Dorsolateral prefrontal cortex (tissue), 120 donors: ENCODE measurements at regions of chr20 and their contacts with region 1.

Region 1: GRCh38 chr20:3888622-3889488 is at the start of gene PANK2:
- DNase-seq: peak; percentile 95 to 99 (median 99)
- H3K4me3 ChIP-seq: peak within 1 kb of the TSS; percentile 69 to 100 (median 94)
- H3K27ac ChIP-seq: peak within 1 kb of the TSS; percentile 60 to 99 (median 96)
- H3K27me3 ChIP-seq: no peaks in the 10 kb centered on the region
- CTCF ChIP-seq: peak in 53 of 56 donors; percentile 8 to 76 (median 43)
- total RNA-seq, gene PANK2: 41.7 to 82.4 (median 57.8) TPM

Region 2: DNA sequence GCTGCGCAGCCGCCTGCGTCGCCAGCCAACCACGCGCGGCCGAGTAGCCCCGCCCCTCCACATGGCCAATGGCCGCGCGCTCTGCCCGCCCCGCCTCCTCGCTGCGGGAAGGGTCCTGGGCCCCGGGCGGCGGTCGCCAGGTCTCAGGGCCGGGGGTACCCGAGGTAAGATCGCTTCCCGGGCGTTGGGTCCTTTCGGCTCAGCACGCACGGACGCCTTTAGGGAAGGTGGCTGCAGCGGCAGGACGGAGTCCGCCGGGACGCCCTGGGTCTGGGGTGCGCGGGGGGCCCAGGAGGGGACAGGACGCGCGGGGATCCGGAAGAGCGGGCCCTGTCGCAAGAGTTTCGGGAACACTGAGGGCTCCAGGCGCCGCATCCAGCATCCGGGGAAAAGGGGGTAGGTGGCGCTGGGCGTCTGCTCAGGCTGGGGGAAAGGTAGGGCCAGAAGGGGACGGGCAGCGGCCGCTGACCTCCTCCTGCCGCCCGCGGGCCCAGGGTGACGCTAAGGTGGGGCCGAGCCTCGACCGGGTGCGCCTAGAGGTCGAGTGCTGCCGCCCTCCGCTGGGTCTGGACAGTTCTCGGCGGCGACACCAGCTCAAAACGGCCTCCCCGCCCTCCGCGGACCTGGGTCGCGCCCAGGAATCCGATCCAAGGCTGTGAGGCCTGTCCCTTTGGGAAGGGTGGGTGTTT is 42.0 kb before region 1 on chr20 and contains the start of gene MAVS:
- intact Hi-C with region 1: loop called in 1 of 2 experiments (anchors 2 kb)
- DNase-seq: peak; percentile 76 to 95 (median 86)
- H3K4me3 ChIP-seq: peak within 1 kb of the TSS; percentile 52 to 100 (median 98)
- H3K27ac ChIP-seq: peak within 1 kb of the TSS; percentile 42 to 97 (median 92)
- H3K27me3 ChIP-seq: no peaks in the 10 kb centered on the region
- CTCF ChIP-seq: peak in 27 of 56 donors; percentile 4 to 45 (median 17)
- total RNA-seq, gene MAVS: 17.4 to 50.9 (median 25.6) TPM

Region 3: DNA sequence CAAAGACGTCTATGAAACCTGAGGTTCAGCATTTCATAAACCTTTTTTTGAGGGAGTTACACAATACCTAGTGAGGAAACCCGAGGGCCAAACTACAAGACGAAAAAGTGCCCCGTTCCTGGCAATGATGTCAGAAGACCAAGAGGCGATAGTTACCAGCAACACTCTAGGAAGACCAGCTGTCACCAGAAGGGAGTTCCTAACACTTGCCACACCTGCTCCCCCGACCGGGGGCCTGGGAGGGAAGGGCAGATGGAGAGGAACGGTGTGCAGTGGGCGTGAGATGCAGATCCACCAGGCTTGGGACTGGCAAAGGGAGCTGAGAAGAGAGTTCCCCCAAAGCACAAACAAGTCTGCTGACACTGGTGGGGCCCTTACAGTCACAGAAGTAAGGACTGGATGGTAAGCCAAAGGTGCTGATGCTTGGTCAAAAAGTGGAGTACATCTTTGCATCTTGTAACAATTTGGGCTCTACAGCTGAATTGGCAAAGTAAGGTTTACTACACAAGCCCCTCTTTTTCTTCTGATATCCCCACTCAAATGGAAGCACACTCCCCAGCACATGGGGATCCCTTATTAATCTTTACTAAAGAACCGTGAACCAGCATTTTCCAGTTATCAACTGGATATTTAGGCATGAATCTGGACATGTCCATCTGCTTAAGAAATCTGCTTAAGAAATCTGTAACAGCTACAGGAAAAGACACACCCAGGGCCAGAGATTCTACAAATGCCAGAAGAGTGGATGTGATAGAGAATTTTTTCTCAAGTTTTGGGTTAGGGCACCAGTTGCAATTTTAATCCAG is 38.8 kb after region 1 on chr20:
- intact Hi-C with region 1: loop called (anchors 5 kb)
- DNase-seq: peak in 2 of 10 donors; percentile 50 to 51
- H3K4me3 ChIP-seq: no peak overlapping the region
- H3K27ac ChIP-seq: peak overlapping the region in 37 of 59 donors; percentile 3 to 76 (median 45)
- H3K27me3 ChIP-seq: no peaks in the 10 kb centered on the region
- CTCF ChIP-seq: no peak

Region 4: DNA sequence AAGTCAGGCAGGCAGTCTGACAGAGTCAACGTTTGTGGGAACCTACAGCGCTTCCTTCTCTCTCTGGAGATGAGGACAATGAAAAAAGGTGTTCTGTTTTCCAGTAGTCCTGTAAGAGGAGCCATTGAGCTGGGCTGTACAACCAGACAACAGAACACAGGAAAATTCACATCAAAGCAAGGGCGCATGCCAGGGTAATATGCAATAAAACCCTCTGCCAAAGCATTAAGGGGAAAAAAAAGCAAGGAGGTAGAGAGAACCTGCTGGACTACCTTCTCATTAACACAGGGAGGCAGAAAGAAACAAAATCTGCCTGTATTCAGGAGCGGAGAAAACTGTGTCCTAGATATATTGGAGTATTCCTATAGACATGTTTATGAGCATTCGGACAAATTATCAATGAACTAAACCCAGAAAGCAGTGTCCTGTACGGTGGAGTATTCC is 125.2 kb after region 1 on chr20:
- intact Hi-C with region 1: loop called (anchors 1 to 2 kb)
- DNase-seq: peak in 3 of 10 donors; percentile 19 to 65 (median 48)
- H3K4me3 ChIP-seq: peak overlapping the region in 58 of 59 donors; percentile 6 to 93 (median 84)
- H3K27ac ChIP-seq: peak overlapping the region in 52 of 59 donors; percentile 13 to 96 (median 77)
- H3K27me3 ChIP-seq: no peaks in the 10 kb centered on the region
- CTCF ChIP-seq: peak in 54 of 56 donors; percentile 25 to 66 (median 52)

Region 5: DNA sequence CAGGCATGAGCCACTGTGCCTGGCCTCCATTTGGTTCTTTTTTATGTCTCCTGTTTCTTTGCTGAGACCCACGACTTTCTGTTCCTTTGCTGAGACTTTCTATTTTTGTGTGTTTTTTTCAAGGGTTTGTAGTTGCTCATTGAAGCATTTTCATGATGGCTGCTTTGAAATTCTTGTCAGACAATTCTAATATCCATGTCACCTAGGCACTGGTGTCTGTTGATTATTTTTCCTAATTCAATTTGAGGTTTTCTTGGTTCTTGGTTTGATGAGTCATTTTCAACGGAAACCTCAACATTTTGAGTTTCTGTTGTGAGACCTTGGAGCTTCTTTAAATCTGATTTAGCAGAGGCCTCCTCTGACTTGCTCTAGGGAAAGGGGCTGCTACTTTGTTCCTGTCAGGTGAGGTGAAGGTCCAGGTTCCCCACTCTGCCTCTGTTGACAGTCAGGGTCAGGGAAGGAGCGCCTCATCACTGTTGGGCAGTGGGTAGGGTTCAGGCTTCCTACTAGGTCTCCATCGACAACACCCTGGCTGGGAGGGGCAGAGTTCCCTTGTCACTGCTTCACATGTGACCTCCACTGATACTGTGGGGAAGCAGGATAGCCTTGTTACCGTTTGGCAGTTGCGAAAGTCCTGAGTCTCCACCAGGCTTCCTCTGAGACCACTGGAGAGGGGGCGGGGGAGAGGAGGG is 193.7 kb after region 1 on chr20:
- intact Hi-C with region 1: loop called (anchors 2 to 10 kb)
- DNase-seq: no peak
- H3K4me3 ChIP-seq: no peak overlapping the region
- H3K27ac ChIP-seq: peak overlapping the region in 2 of 59 donors; percentile 4 to 43
- H3K27me3 ChIP-seq: no peaks in the 10 kb centered on the region
- CTCF ChIP-seq: no peak

Region 6: DNA sequence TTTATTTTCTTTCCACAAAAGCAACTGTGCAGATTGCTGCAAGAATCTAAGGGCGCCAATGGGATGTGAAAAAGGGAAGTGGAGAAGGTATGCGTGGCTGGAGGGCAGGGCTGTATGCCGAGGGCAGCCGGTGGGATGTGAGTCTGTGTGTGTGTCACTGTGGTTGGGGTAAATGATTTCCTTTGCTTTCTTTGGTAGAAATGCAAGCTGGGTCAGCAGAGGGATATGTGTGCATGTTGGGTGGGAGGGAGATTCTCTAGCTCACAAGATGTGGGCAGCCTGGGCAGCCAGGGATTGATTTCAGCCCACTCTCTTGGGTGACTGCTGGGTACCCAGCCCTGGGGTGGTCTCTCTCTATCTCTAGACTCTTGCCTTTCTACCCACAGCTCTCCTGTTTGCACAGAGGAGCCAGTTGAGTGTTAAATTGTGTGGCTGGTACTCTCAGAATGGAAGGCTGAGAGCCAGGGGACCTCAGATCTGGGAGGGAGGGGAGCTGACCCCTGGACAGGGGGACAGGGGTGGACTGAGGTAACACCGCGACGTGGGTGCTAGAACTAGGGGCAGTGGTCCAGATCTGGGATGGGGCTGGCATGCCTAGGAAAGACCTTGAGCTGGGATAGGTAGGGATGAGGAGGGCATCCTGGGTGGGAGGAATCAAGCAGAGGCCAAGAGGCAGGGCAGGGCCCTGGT is 263.3 kb after region 1 on chr20:
- intact Hi-C with region 1: loop called in 1 of 2 experiments (anchors 10 kb)
- DNase-seq: no peak
- H3K4me3 ChIP-seq: peak overlapping the region in 22 of 59 donors; percentile 4 to 87 (median 22)
- H3K27ac ChIP-seq: peak overlapping the region in 45 of 59 donors; percentile 9 to 89 (median 64)
- H3K27me3 ChIP-seq: no peaks in the 10 kb centered on the region
- CTCF ChIP-seq: no peak